ENCODE measurements at regions of chr17 and their contacts with region 1.

Region 1: DNA sequence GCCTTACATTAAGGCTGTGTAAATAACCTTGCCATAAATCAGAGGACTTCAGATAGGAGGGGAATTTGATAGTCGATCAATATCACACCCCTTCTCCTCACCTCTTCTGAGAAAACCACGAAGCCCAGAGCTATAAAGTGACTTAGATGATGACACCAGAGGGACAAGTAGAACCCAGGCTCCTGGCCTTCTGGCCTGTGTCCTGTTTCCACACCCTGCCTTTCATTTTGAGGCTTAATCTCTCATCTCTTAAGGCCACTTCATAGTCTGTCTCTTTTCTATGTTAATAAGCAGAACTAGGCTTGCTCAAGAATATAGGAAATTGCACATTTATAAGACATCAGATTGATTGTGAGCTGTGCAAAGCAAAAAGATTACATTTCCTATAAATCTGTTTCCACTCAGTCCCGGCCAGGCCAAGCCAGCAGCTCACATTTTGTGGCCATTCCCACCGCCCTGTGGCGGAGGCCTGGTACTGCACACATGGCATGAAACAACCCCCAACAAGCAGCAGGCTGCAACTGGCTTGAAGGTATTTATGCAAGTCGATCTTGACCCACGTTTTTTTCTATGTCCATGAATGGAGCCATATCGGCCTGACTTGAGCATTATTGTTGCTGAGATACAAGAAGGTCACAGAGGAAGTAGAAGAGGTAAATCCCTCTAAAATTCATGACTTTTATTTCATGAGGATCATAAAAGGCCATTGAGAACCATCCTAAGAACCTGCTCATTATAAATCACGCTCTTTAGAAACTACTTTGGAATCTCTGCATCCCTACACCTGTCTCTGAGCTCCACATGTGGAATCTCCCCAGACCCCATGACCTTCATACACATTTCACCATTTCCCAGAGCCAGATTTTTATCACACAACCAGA is 93.7 kb downstream of the PMP22 start:
- DNase-seq: no peak
- H3K4me3 ChIP-seq: no peak overlapping the region
- CTCF ChIP-seq: peak; percentile 98

Region 2: GRCh38 chr17:14768933-14769332 is 402.5 kb before region 1 on chr17:
- CTCF ChIA-PET with region 1: no interaction called
- POLR2A ChIA-PET with region 1: no interaction called
- DNase-seq: no peak
- H3K4me3 ChIP-seq: no peak overlapping the region
- CTCF ChIP-seq: no peak

Region 3: DNA sequence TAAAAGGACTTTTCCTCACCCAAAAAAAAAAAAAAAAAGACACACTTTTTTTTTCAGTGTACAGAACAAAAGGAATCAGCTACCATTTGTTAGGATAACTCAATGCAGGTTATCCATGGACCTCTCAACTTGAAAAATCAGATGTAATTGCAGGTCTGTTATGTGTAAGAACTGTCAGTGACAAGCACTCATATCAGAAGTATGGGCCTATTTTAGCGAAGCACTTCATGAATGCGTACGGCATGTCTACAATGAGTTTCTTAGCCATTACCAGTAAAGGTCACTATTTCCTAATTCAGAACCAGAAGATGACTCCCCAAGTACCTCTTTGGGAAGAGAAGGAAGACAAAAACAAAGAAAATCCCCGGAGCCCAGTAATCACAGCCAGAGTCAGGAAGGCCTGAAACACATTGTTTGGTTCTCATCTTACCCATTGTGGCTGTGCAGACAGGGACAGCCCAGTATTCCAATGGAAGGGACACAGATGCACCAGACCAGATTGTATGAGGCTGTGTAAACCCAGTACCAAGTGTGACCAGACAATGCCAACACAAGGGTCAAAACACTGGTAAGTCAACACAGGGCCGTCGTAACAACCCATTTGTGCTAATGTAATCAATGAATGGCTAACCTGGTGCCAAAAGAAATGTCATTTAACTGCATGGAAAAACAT is 94.3 kb before region 1 on chr17:
- CTCF ChIA-PET with region 1: no interaction called
- POLR2A ChIA-PET with region 1: no interaction called
- DNase-seq: no peak
- H3K4me3 ChIP-seq: no peak overlapping the region
- CTCF ChIP-seq: no peak

Region 4: GRCh38 chr17:15185625-15185991 is 14.2 kb after region 1 on chr17:
- CTCF ChIA-PET with region 1: interaction called, 10 read pairs
- POLR2A ChIA-PET with region 1: no interaction called
- DNase-seq: peak; percentile 69
- H3K4me3 ChIP-seq: no peak overlapping the region
- CTCF ChIP-seq: no peak

Region 5: DNA sequence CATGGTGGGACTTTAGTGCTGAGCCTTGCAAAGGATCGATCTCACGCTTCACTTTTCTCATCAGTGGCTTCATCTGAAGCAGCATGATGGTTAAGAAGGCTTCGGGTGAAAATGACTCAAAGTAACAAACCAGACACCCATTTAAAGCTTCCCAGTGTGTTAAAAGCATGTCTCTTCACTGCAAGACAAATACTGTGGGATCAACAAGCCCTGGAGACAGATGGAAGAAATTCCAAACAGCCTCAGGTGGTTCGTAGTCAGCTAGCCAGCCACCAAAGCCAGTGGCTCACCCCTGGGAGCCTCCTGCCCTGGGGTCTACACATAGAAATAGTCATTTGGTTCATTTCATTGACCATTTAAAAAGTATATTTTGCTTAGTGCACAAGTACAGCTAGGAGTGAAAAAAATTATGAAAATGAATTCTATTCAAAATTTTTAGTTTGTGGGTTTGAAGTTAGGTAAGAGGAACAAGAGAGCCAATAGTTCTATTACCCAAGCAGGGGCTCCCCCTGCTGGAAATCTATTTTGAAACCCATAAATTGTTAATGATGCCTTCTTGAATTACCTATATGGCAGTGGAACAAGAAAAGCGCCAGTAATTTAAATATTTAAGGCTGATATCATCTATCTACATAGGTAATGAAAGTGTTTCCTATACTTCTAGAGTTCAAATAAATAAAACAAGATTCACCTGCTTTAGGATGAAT is 42.1 kb after region 1 on chr17:
- CTCF ChIA-PET with region 1: interaction called, 13 read pairs
- POLR2A ChIA-PET with region 1: no interaction called
- DNase-seq: no peak
- H3K4me3 ChIP-seq: no peak overlapping the region
- CTCF ChIP-seq: peak; percentile 17